Transverse colon (tissue), 4 donors: ENCODE measurements at regions of chr18 and their contacts with region 1.

Region 1: DNA sequence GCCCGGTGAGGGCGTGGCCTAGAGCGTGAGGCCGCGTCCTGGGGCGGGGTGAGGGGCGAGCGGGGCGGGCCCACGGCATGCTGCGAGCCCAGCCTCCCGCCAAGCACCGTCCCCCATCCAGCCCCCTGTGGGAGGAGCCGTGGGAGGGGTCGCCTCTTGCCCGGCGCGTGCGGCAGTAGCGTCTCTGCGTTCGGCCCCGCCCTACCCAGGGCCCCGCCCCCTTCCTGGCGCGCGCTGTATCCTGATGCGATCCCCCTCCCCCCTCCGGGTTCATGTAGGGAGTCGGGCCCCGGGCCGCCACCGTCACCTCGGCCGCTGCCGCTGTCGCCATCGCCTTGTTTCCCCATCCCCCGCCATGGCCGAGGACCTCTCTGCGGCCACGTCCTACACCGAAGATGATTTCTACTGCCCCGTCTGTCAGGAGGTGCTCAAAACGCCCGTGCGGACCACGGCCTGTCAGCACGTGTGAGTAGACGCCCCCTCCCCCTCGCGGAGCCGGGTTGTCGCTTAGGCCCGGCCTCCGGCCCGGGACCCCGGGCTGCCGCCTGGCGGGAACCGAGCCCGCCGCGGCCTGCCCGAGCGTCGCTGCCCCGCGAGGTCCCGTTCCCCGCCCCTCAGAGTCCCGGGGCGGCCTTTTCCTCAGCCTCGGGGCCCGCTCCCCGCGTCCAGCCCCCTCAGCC is 888 bp downstream of the RNF138 start:
- DNase-seq: peak; percentile 100
- H3K4me3 ChIP-seq: peak overlapping the region; percentile 85 to 98 (median 88)
- H3K27ac ChIP-seq: peak overlapping the region; percentile 100
- H3K4me1 ChIP-seq: peaks cover 16 to 44% (median 26%) of the 10 kb centered on the region in 4 donors
- H3K27me3 ChIP-seq: no peaks in the 10 kb centered on the region
- CTCF ChIP-seq: no peak
- EP300 ChIP-seq: no peak
- POLR2A ChIP-seq: peak; percentile 58

Region 2: GRCh38 chr18:31942999-31943865 is 149.3 kb before region 1 on chr18 and contains the start of gene TRAPPC8:
- in situ Hi-C with region 1: loop called in 1 of 4 experiments (anchors 25 kb)
- intact Hi-C with region 1: no loop called
- DNase-seq: peak; percentile 99
- H3K4me3 ChIP-seq: peak within 1 kb of the TSS; percentile 86 to 96 (median 90)
- H3K27ac ChIP-seq: peak within 1 kb of the TSS; percentile 97 to 99 (median 98)
- H3K4me1 ChIP-seq: peaks cover 10 to 47% (median 19%) of the 10 kb centered on the region in 4 donors
- H3K27me3 ChIP-seq: no peaks in the 10 kb centered on the region
- CTCF ChIP-seq: no peak
- EP300 ChIP-seq: no peak
- POLR2A ChIP-seq: peak; percentile 61
- total RNA-seq, gene TRAPPC8: 51.5 to 69.9 (median 55.0) TPM